Heart right ventricle (tissue), 16 donors: ENCODE measurements at regions of chr6 and their contacts with region 1.

Region 1: DNA sequence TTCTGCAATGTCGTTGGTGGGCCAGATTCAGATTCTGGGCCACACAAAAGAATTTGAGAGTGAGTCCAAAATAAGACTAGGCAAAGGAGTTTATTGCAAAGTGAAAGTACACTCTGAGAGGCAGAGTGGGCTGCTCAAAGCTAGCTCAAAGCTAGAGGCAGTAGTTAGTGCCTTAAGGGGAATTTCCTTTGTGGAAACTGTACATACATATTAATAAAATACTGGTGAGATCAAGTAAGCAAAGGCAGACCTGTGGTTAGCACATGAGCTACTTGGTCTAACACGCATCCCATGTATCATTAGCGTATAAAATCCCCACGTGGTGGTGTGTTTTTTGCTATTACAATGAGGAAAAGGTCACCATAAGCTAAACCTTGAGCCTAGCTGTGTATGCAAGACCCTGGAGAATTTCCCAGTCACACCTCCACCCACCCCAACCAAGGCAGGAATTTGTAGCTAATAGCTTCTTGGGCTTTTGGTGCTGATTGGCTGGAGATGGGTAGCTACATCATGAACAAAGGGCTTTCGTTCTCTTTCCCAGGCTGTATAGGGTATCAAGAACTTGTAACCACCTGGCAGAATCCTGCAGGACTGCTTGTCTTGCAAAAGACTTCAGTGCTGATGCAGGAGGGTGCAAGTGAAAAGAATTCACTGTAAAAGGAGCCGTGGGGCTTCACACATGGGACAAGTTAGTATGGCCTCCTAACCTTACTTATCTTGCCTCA is 14.7 kb upstream of the TRIM26 start:
- DNase-seq: no peak
- ATAC-seq: no peak
- H3K4me3 ChIP-seq: no peak overlapping the region
- H3K27ac ChIP-seq: no peak overlapping the region
- H3K4me1 ChIP-seq: no peaks in the 10 kb centered on the region
- H3K27me3 ChIP-seq: peaks cover 0 to 6% (median 0%) of the 10 kb centered on the region in 7 donors
- CTCF ChIP-seq: no peak

Region 2: GRCh38 chr6:30311101-30311500 is 83.2 kb after region 1 on chr6:
- intact Hi-C with region 1: loop called in 1 of 10 experiments (anchors 10 kb)
- DNase-seq: no peak
- ATAC-seq: no peak
- H3K4me3 ChIP-seq: no peak overlapping the region
- H3K27ac ChIP-seq: no peak overlapping the region
- H3K4me1 ChIP-seq: peaks cover 0 to 4% (median 0%) of the 10 kb centered on the region in 9 donors
- H3K27me3 ChIP-seq: no peaks in the 10 kb centered on the region
- CTCF ChIP-seq: no peak